ENCODE measurements at regions of chr4 and their contacts with region 1.

Region 1: DNA sequence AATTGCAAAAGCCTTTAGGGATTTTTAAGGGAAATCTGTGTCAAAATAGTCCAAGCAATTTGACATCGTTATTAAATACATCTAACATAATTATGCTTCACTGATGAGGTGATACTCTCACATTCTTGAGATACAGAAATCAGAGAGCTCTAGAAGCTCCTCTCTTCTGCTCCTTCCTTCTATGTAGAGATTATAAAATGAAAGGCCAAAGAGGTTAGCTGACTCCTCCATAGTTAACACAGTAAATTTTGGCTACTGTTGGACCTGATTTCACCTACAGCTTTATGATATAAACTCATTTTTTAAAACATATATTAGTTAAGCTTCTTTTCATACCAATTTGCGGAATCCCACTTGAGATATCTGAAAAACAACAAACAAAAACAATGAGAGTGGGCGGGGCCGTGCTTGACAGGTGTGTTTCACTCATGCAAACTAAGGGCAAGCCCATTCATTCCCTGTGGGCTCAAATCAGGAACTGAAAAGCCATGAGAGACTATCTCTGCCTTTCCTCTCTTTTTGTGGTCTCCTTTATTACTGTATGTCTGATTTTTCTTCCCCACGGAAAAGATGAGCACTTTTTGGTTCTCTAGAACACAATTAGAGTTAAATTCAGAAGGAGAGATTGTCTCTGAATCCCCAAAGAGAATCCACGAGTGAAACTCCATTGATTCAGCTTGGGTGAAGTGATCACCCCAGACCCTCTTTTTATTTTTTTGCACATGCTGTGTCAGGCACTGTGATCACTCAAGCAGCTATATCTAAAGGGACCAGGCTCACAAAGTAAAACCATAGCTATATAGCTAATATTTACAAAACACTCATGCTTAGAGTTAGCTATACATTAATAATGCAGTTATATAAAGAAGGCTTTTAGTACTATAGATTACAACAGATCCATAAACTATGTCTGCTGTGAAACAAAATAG is 566.3 kb downstream of the IL15 start:
- DNase-seq: no peak
- H3K4me3 ChIP-seq: no peak overlapping the region
- H3K4me3 Mint-ChIP-seq: no peak overlapping the region
- H3K27ac ChIP-seq: no peak overlapping the region
- H3K27ac Mint-ChIP-seq: peak overlapping the region in 2 of 7 donors; percentile 5 to 36
- H3K4me1 ChIP-seq: no peaks in the 10 kb centered on the region
- H3K4me1 Mint-ChIP-seq: peaks cover 13 to 19% (median 15%) of the 10 kb centered on the region in 4 donors
- H3K27me3 ChIP-seq: no peaks in the 10 kb centered on the region
- H3K27me3 Mint-ChIP-seq: no peaks in the 10 kb centered on the region

Region 2: DNA sequence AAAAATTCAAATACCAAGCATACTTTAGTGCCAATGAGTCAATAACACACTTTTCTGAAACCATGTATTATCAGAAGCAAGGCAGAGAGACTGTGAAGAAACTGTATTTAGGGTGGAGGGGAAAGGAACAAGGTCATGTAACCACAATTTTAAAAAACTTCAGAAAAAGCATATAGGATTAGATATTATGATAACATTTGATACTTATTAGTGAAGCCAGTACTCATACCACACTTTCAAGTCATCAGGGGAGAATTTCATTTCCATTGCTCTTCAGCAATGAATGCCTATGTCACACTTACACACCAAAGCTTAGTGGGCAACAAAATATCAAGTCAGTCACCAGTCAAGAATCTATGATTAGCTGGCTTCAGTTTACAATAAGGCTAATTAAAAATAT is 35.9 kb after region 1 on chr4:
- CTCF ChIA-PET with region 1: no interaction called
- POLR2A ChIA-PET with region 1: interaction called, 3 read pairs
- intact Hi-C with region 1: loop called (anchors 5 kb)
- DNase-seq: no peak
- H3K4me3 ChIP-seq: no peak overlapping the region
- H3K4me3 Mint-ChIP-seq: no peak overlapping the region
- H3K27ac ChIP-seq: no peak overlapping the region
- H3K27ac Mint-ChIP-seq: peak overlapping the region in 5 of 7 donors; percentile 38 to 85 (median 63)
- H3K4me1 ChIP-seq: no peaks in the 10 kb centered on the region
- H3K4me1 Mint-ChIP-seq: peaks cover 36 to 57% (median 45%) of the 10 kb centered on the region in 4 donors
- H3K27me3 ChIP-seq: no peaks in the 10 kb centered on the region
- H3K27me3 Mint-ChIP-seq: no peaks in the 10 kb centered on the region

Measured in CD4-positive, alpha-beta memory T cell (primary cell).